Activated naive CD4-positive, alpha-beta T cell treated with anti-CD3 and anti-CD28 coated beads for 36 hours (primary cell): ENCODE measurements at regions of chr14 and their contacts with region 1.

Region 1: GRCh38 chr14:26344596-26344995 is 253.2 kb downstream of the NOVA1 start:
- DNase-seq: no peak
- H3K4me3 Mint-ChIP-seq: no peak overlapping the region
- H3K27ac Mint-ChIP-seq: no peak overlapping the region
- H3K4me1 Mint-ChIP-seq: no peaks in the 10 kb centered on the region
- H3K27me3 Mint-ChIP-seq: no peaks in the 10 kb centered on the region

Region 2: DNA sequence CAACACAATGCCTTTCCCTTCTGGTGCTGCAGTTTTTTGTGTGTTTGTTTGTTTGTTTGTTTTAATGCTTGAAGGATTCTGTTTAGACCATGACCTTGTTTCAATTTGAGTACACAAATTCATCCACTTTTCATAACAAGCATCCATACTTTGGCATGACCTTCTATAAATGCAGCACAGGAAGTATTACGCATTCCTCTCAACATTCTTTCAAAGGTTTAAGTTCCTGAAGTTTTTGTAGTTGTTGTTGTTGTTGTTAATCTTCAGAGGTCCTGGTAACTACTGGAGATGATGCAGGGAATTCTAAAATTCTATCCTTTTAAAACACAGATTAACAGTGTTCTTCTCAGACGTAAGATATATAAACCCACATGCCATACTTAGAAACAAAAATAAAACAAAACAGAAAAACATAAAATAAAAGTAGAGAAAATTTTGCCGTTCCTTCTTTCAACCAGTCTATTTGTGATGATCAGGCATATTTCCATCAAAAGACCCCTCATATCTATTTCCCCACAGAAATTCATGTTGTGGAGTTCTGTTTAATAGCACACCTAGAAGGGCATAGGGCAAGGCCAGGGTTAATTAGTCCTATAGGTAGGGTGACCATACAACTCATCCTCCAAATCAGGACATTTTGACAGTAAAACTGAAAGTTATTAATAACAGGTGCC is 276.7 kb before region 1 on chr14:
- CTCF ChIA-PET with region 1: interaction called, 11 read pairs
- intact Hi-C with region 1: no loop called
- DNase-seq: no peak
- H3K4me3 Mint-ChIP-seq: no peak overlapping the region
- H3K27ac Mint-ChIP-seq: no peak overlapping the region
- H3K4me1 Mint-ChIP-seq: no peaks in the 10 kb centered on the region
- H3K27me3 Mint-ChIP-seq: no peaks in the 10 kb centered on the region

Region 3: DNA sequence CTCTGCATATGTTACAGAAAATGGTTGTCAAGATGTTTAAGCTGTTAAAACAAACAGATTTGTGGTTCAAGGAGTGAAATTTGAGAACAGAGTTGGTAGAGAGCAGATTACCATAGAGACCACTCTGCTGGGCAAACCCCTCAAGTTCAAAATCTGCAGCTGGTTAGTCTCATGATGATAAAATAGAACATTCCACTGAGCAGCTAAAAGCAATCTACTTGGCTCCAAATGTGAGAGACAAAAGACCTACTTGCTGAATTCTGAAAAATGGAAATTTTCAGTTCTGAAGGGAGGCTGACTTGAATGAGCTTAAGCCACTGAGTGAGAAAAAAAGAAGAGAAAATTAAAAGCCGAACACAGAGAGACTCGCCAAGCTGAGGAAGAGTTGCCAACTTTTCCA is 266.0 kb before region 1 on chr14:
- CTCF ChIA-PET with region 1: no interaction called
- intact Hi-C with region 1: no loop called
- DNase-seq: no peak
- H3K4me3 Mint-ChIP-seq: no peak overlapping the region
- H3K27ac Mint-ChIP-seq: no peak overlapping the region
- H3K4me1 Mint-ChIP-seq: no peaks in the 10 kb centered on the region
- H3K27me3 Mint-ChIP-seq: no peaks in the 10 kb centered on the region